ENCODE measurements at regions of chr2 and their contacts with region 1.

Region 1: DNA sequence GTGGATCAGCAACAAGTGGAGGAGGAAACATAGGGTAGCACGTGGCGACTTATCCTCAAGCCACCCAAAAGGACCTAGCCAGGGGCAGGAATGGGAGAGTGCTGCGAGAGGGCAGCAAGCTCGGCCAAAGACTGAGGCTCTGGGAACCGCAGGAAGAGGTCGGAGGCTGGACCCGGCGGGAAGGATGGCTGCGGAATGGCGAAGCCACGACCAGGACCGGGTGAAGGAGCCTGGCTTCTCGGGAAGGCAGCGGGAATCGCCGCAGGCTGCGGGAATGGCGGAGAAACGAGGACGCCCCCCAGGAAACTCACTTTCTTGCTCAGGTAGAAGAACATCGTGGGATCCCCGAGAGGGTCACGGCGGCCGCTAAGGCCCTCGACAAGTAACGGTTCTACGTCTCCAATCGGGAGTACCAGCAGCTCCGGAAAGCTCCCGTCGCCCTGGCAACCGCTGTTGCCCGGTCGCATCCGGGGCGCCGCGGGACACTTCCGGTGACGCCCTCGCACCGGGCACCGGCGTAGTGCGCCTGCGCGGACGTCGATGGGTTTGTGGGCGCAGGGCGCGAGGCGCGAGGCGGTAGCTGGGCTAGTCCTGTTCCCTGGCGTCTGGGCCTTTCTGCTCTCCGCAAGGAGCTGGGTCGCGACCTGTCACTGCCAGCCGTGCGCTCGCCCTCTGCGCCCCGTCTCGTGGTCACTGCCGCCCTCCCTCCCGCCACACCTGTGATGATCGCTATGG is at the start of gene WDR35:
- DNase-seq: peak; percentile 96
- H3K4me3 ChIP-seq: peak within 1 kb of the TSS; percentile 69
- H3K27ac ChIP-seq: peak within 1 kb of the TSS; percentile 60
- H3K4me1 ChIP-seq: peaks cover 8% of the 10 kb centered on the region
- H3K27me3 ChIP-seq: no peaks in the 10 kb centered on the region
- CTCF ChIP-seq: no peak
- total RNA-seq, gene WDR35: 26.2 and 29.4 TPM in 2 replicates

Region 2: GRCh38 chr2:19435815-19436214 is 554.0 kb before region 1 on chr2:
- CTCF ChIA-PET with region 1: no interaction called
- POLR2A ChIA-PET with region 1: no interaction called
- intact Hi-C with region 1: no loop called
- DNase-seq: peak; percentile 59
- H3K4me3 ChIP-seq: no peak overlapping the region
- H3K27ac ChIP-seq: no peak overlapping the region
- H3K4me1 ChIP-seq: no peaks in the 10 kb centered on the region
- H3K27me3 ChIP-seq: no peaks in the 10 kb centered on the region
- CTCF ChIP-seq: no peak

Region 3: GRCh38 chr2:19939358-19939757 is 50.5 kb before region 1 on chr2:
- CTCF ChIA-PET with region 1: no interaction called
- POLR2A ChIA-PET with region 1: interaction called, 10 read pairs
- intact Hi-C with region 1: no loop called
- DNase-seq: no peak
- H3K4me3 ChIP-seq: no peak overlapping the region
- H3K27ac ChIP-seq: no peak overlapping the region
- H3K4me1 ChIP-seq: peaks cover 4% of the 10 kb centered on the region
- H3K27me3 ChIP-seq: no peaks in the 10 kb centered on the region
- CTCF ChIP-seq: no peak

Measured in A673 (cell line).